Activated CD8-positive, alpha-beta T cell treated with anti-CD3 and anti-CD28 coated beads, Interleukin-2, amount 10 ng/mL, durations not matched to agents 7 days and 5 days (primary cell): ENCODE measurements at regions of chr1 and their contacts with region 1.

Region 1: GRCh38 chr1:24415334-24415909 is at the start of gene NIPAL3:
- DNase-seq: peak; percentile 99
- ATAC-seq: peak; percentile 96
- H3K4me3 Mint-ChIP-seq: peak within 1 kb of the TSS; percentile 99
- H3K27ac Mint-ChIP-seq: peak within 1 kb of the TSS; percentile 90
- H3K4me1 Mint-ChIP-seq: peaks cover 65% of the 10 kb centered on the region
- H3K27me3 Mint-ChIP-seq: no peaks in the 10 kb centered on the region
- total RNA-seq, gene NIPAL3: 43.4 to 46.9 TPM

Region 2: DNA sequence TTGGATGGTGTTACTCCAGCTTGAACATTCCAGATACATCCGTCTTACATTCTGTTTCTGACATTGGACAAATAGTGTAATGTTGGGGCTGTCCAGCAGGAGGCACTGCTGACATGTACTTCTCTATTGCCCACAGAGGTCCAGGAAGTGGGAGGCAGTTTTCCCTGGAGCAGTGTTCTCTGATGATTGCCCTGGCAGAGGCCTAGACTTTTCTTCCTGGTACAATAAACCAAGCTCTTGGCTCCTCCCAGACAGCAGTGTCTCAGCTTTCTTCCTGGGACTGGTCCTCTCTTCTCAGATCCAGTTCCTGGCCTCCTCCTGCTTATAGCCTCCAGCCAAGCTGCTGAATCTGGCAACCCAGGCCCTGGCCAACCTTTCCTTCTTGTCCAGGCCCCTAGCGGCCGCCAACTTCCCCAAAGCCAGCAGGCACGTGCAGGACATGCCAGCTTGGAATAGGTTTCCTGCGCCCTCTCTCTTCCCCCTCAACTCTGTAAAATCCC is 213.4 kb before region 1 on chr1:
- CTCF ChIA-PET with region 1: interaction called, 82 read pairs
- POLR2A ChIA-PET with region 1: no interaction called
- DNase-seq: peak; percentile 72
- ATAC-seq: peak; percentile 24
- H3K4me3 Mint-ChIP-seq: no peak overlapping the region
- H3K27ac Mint-ChIP-seq: no peak overlapping the region
- H3K4me1 Mint-ChIP-seq: peaks cover 9% of the 10 kb centered on the region
- H3K27me3 Mint-ChIP-seq: peaks cover 10% of the 10 kb centered on the region

Region 3: GRCh38 chr1:24244519-24245268 is 170.7 kb before region 1 on chr1:
- CTCF ChIA-PET with region 1: no interaction called
- POLR2A ChIA-PET with region 1: no interaction called
- DNase-seq: no peak
- ATAC-seq: no peak
- H3K4me3 Mint-ChIP-seq: no peak overlapping the region
- H3K27ac Mint-ChIP-seq: no peak overlapping the region
- H3K4me1 Mint-ChIP-seq: no peaks in the 10 kb centered on the region
- H3K27me3 Mint-ChIP-seq: peaks cover 6% of the 10 kb centered on the region

Region 4: DNA sequence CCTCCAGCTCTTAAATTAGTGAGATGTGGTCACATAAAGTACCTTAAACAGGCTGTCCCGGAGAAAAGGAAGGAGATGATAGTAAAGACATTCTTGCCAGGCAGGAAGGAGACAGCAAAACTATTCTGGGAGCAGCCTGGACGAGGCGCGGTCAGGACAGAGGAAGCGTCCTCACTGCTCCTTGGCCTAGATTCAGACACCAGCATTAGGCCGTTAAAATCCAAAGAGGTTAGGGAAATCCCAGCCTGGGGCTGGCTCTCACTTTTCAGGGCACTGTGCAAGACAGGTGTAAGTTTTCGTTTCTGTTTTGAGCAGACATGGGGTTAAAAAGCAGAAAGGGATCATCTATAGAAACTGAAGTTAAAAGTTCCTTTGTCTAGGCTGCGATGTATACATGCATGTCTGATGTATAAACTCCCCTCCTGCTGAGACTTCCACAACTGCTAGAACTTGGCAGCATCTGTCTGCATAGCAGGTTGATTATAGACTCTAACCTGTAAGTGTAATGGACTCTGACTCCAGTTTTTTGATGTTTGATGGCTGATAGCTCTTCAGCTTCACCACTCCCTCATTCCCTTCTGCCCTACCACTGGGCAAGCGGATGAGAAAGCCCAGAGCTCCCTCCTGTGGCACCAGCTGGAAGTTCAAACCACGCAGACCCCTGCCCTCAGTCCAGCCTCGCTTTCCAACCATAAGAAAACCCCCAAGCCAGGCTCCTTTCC is 23.4 kb before region 1 on chr1:
- CTCF ChIA-PET with region 1: interaction called, 133 read pairs
- POLR2A ChIA-PET with region 1: interaction called, 4 read pairs
- DNase-seq: peak; percentile 65
- ATAC-seq: peak; percentile 71
- H3K4me3 Mint-ChIP-seq: peak overlapping the region; percentile 67
- H3K27ac Mint-ChIP-seq: peak overlapping the region; percentile 87
- H3K4me1 Mint-ChIP-seq: peaks cover 26% of the 10 kb centered on the region
- H3K27me3 Mint-ChIP-seq: no peaks in the 10 kb centered on the region

Region 5: DNA sequence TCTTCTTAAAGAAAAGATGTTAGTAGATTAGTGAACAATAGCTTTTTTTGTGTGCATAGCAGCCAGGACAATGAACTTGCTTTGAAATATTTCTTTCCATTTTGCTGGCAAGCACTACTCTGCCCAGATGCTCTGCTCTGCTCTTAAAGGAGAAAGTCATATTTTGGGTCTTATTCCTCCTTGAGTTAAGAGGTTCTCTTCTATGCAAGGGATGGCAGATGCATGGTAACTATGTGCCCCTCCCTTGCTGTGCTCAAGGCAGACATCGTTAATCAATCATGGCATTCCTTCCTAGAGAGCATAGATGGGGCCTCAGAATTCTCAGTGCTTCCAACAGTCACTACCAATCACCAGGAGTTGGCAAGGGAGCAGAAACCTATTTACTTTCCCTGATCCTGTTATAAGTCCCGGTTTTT is 27.8 kb after region 1 on chr1:
- CTCF ChIA-PET with region 1: interaction called, 23 read pairs
- POLR2A ChIA-PET with region 1: no interaction called
- DNase-seq: no peak
- ATAC-seq: no peak
- H3K4me3 Mint-ChIP-seq: no peak overlapping the region
- H3K27ac Mint-ChIP-seq: no peak overlapping the region
- H3K4me1 Mint-ChIP-seq: no peaks in the 10 kb centered on the region
- H3K27me3 Mint-ChIP-seq: no peaks in the 10 kb centered on the region

Region 6: DNA sequence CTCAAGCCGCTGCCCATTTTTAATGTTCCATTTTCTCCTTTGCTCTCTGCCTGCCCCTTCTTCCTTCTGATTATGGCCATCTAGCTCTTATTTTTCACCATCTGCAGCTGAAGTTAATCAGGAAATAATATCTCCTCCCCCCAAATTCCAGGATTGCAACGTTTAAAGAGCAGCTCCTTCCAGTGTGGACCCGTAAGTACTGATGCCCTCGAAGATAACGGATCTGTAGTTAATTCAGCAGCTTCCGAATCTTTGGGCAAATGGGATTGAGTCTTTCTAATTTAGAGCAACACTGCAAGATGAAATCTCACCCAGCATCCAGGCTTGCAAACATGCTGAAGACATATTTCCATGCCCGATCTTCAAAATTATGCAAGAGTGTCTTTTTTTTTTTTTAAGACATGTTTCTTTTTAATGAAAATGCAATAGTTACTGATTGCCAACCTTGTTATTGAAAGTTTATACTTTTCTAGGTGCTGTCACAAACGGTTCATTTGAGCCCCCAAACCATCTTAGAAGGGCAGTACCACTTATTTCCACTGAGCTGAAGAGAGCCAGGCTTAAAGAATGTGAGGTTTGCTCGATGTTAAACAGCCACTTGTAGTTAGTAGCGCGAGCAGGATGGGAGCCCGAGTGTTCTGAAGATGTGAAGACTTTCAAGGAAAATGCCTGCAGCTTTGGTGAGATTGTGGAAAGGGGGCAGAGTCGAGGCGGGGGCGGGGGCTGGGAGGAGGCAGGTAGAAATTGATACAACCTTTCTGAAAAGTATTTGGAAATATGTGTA is 76.3 kb after region 1 on chr1:
- CTCF ChIA-PET with region 1: interaction called, 56 read pairs
- POLR2A ChIA-PET with region 1: interaction called, 11 read pairs
- DNase-seq: no peak
- ATAC-seq: no peak
- H3K4me3 Mint-ChIP-seq: no peak overlapping the region
- H3K27ac Mint-ChIP-seq: no peak overlapping the region
- H3K4me1 Mint-ChIP-seq: peaks cover 33% of the 10 kb centered on the region
- H3K27me3 Mint-ChIP-seq: no peaks in the 10 kb centered on the region

Region 7: GRCh38 chr1:24536391-24536840 is 121.0 kb after region 1 on chr1:
- CTCF ChIA-PET with region 1: interaction called, 159 read pairs
- POLR2A ChIA-PET with region 1: interaction called, 6 read pairs
- DNase-seq: peak; percentile 77
- ATAC-seq: peak; percentile 59
- H3K4me3 Mint-ChIP-seq: peak overlapping the region; percentile 84
- H3K27ac Mint-ChIP-seq: peak overlapping the region; percentile 97
- H3K4me1 Mint-ChIP-seq: peaks cover 77% of the 10 kb centered on the region
- H3K27me3 Mint-ChIP-seq: no peaks in the 10 kb centered on the region

Region 8: DNA sequence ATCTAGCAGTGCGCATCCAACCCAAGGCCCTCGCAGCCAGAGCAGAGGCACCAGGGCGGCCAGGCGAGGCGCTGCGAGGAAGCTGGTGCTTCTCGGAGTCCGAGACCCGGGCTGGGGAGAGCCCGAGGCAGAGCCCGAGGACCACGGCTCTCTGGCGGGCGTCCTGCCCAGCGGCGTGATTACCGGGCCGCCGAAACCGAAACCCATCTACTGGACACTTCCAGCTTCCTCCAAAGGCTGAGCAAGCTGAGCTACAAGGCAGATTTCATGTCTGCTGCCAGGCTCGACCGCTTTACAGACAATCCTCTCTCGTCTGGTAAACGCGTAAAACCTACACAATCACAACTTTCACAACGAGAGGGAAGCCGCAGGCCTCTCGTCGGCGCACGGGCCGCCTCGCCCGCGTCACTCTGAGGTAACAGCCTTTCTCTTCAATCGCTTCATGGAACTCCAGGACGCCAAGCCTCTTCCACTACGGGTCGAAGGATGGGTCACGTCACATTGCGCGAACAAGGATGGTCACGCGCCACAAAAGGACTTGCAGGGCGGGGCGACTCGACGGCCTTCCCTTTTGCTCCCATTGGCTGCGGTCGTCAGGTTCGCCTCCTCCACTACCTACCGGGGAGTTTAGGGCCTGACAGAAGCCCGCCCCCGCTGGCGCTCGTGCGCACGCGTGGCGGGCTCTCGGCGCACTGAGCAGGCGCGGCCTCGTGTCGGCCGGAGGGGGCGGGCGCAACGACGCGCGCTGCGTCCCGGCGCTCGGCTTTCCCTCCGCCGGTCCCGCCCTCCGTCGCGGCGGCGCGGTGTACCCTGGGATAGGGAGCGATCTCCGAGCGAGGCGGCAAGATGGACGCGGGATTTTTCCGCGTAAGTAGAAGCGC is 227.3 kb after region 1 on chr1 and contains the start of gene SRRM1:
- CTCF ChIA-PET with region 1: interaction called, 13 read pairs
- POLR2A ChIA-PET with region 1: interaction called, 3 read pairs
- DNase-seq: peak; percentile 100
- ATAC-seq: peak; percentile 94
- H3K4me3 Mint-ChIP-seq: peak within 1 kb of the TSS; percentile 96
- H3K27ac Mint-ChIP-seq: peak within 1 kb of the TSS; percentile 97
- H3K4me1 Mint-ChIP-seq: peaks cover 46% of the 10 kb centered on the region
- H3K27me3 Mint-ChIP-seq: no peaks in the 10 kb centered on the region
- total RNA-seq, gene SRRM1: 189 to 207 TPM

Region 9: DNA sequence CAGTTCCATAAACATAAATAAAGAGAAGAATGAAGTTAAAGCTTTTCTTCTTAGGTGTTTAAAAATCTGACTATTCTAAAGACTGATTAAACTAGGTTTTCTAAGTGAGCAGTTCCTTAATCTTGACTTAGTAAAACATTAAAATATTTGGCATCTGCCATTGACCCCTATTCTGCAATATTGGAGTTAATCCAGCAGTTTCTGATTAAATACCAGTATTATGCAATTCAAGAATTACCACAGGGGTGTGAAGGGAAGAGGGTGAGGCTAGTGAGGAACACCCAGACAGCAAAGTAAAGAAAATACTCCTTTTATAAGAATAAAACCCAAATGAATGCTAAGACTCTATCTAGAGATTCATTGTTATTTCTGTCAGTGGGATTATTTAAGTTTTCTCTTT is 370.8 kb after region 1 on chr1:
- CTCF ChIA-PET with region 1: no interaction called
- POLR2A ChIA-PET with region 1: no interaction called
- DNase-seq: no peak
- ATAC-seq: no peak
- H3K4me3 Mint-ChIP-seq: no peak overlapping the region
- H3K27ac Mint-ChIP-seq: no peak overlapping the region
- H3K4me1 Mint-ChIP-seq: no peaks in the 10 kb centered on the region
- H3K27me3 Mint-ChIP-seq: peaks cover 10% of the 10 kb centered on the region